Spleen (tissue), 13 donors: ENCODE measurements at regions of chr19 and their contacts with region 1.

Region 1: GRCh38 chr19:12763100-12763499 is 11.5 kb downstream of the BEST2 start:
- DNase-seq: no peak
- H3K4me3 ChIP-seq: no peak overlapping the region
- H3K27ac ChIP-seq: no peak overlapping the region
- H3K4me1 ChIP-seq: peaks cover 0 to 19% (median 9%) of the 10 kb centered on the region in 6 donors
- H3K27me3 ChIP-seq: peaks cover 0 to 1% (median 0%) of the 10 kb centered on the region in 7 donors
- CTCF ChIP-seq: no peak
- POLR2A ChIP-seq: no peak

Region 2: GRCh38 chr19:12796146-12797071 is 33.3 kb after region 1 on chr19:
- intact Hi-C with region 1: loop called (anchors 5 kb)
- DNase-seq: peak; percentile 93
- H3K4me3 ChIP-seq: peak overlapping the region in 3 of 8 donors; percentile 2 to 49 (median 12)
- H3K27ac ChIP-seq: peak overlapping the region; percentile 49 to 100 (median 76)
- H3K4me1 ChIP-seq: peaks cover 21 to 55% (median 45%) of the 10 kb centered on the region in 6 donors
- H3K27me3 ChIP-seq: peaks cover 0 to 5% (median 0%) of the 10 kb centered on the region in 7 donors
- CTCF ChIP-seq: peak; percentile 91 to 100 (median 96)
- POLR2A ChIP-seq: no peak

Region 3: DNA sequence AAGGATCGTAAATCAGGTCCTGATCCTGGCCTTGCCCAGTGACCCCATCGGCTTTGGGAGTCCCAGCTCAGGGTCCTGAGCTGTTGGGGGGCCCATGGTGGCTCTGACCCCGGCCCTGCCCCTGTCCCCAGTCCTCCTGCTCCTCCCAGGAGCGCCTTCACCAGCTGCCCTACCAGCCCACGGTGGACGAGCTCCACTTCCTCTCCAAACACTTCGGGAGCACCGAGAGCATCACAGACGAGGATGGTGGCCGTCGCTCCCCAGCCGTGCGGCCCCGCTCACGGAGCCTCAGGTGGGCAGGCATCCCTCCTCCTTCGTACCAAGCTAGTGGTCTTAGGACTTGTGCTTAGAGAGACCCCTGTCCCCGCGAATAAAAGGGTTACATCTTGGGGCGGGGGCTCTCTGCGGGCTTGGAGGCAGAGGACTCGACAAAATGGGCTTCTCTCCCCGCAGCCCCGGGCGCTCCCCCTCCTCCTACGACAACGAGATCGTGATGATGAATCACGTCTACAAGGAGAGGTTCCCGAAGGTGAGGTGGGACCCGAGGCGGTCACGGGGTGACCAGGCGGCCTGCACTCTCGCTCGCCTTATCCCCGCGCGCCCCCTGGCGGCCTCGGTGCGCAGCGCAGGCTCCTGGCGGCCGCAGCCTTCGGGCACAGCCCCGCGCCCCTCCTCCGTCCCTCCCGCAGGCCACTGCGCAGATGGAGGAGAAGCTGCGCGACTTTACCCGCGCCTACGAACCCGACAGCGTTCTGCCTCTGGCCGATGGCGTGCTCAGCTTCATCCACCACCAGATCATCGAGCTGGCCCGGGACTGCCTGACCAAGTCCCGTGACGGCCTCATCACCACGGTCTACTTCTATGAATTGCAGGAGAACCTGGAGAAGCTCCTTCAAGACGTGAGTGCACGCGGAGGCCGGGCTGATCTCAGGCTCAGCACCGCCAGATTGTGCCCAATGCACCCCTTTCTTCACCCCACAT is 84.3 kb after region 1 on chr19:
- intact Hi-C with region 1: loop called (anchors 5 kb)
- DNase-seq: peak; percentile 96
- H3K4me3 ChIP-seq: peak overlapping the region in 4 of 8 donors; percentile 8 to 56 (median 14)
- H3K27ac ChIP-seq: no peak overlapping the region
- H3K4me1 ChIP-seq: peaks cover 5 to 11% (median 10%) of the 10 kb centered on the region in 6 donors
- H3K27me3 ChIP-seq: peaks cover 3 to 84% (median 23%) of the 10 kb centered on the region in 7 donors
- CTCF ChIP-seq: peak; percentile 97 to 100 (median 99)
- POLR2A ChIP-seq: no peak